Activated CD4-positive, alpha-beta memory T cell treated with anti-CD3 and anti-CD28 coated beads for 36 hours (primary cell): ENCODE measurements at regions of chr14 and their contacts with region 1.

Region 1: DNA sequence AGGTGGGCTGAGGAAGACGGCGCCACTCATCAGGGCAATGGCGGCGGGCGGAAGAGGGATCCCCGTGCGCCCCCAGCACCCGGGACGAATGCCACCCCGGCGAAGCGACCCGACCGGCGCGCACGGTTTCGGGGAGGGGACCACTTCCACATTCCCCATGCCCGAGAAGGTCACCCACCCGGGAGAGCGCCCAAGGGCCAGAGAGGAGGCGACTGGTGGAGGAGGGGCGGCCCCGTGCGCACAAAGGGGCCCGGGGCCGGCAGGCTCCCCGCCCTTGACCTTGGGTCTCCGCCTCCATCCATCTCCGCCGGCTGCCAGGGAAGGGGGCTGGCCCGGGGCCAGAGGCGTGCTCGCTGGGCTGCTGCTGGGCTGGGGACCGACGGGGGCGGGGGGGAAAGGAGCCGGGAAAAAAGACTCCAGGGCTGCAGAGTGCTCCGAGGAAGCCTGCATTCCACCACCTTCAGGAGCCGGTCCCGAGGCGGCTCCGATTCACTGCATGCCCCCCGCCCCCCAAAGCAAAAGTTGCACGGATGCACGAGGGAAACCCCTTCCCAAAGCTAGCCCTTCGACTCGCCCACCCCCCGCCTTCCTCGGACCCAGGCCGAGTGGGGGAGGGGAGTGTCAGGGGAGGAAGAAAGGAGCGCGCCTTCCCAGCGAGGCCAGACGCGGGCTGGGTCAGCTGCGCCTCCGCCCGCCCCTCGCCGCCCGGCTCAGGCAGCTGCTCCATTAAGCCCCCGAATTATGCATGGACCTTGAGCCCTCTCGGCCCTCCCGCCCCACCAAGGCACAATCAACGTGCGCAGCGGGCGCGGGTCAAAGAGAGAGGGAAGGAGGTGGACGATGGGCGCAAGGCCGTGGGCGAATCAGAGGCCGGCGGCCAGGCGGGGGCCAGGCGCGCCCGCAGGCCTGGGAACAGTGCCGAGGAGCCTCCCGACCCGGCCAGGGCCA is 26.2 kb downstream of the BCL11B start:
- DNase-seq: no peak
- H3K4me3 Mint-ChIP-seq: peak overlapping the region; percentile 75
- H3K27ac Mint-ChIP-seq: peak overlapping the region; percentile 96
- H3K4me1 Mint-ChIP-seq: peaks cover 74% of the 10 kb centered on the region
- H3K27me3 Mint-ChIP-seq: no peaks in the 10 kb centered on the region

Region 2: GRCh38 chr14:99230208-99231151 is 15.4 kb before region 1 on chr14:
- CTCF ChIA-PET with region 1: interaction called, 23 read pairs
- POLR2A ChIA-PET with region 1: interaction called, 10 read pairs
- intact Hi-C with region 1: loop called (anchors 2 kb)
- DNase-seq: peak; percentile 94
- H3K4me3 Mint-ChIP-seq: peak overlapping the region; percentile 68
- H3K27ac Mint-ChIP-seq: peak overlapping the region; percentile 96
- H3K4me1 Mint-ChIP-seq: peaks cover 95% of the 10 kb centered on the region
- H3K27me3 Mint-ChIP-seq: no peaks in the 10 kb centered on the region

Region 3: DNA sequence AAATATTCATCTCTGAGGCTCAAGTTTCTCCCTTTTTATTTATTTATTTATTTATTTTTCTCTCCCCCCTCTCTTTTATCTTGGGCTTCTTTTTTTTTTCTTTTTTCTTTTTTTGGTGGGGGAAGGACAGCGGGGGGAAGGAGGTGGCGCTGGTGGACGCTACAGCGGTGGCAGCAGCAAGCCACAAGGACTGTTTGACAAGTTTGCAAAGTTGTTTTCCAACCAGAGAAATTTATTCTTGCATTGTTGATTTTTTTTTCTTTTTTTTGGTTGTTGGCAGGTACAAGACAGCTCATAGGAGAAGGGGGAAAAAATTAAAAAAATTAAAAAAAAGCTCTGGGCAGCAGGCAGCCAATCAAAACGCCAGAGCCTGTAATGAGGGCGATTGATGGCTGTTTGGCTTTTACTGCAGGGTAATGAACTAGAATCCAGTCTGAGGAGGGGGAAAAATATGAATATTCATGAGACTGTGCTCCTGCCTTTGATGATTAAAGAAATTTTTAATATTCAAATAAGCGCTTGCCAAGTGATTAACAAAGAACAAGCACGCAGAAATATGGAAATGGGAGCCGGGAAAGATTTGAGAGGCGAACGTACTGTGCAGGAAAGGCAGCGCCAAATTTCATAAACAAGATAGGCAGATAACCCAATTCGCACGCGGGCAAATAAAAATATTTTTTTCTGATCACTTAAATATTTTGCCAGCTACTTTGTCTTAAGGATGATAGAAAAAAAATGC is 10.1 kb before region 1 on chr14:
- CTCF ChIA-PET with region 1: interaction called, 23 read pairs
- POLR2A ChIA-PET with region 1: interaction called, 12 read pairs
- intact Hi-C with region 1: loop called (anchors 2 kb)
- DNase-seq: no peak
- H3K4me3 Mint-ChIP-seq: peak overlapping the region; percentile 76
- H3K27ac Mint-ChIP-seq: peak overlapping the region; percentile 96
- H3K4me1 Mint-ChIP-seq: peaks cover 91% of the 10 kb centered on the region
- H3K27me3 Mint-ChIP-seq: no peaks in the 10 kb centered on the region

Region 4: GRCh38 chr14:99260587-99261551 is 15.0 kb after region 1 on chr14:
- CTCF ChIA-PET with region 1: interaction called, 44 read pairs
- POLR2A ChIA-PET with region 1: interaction called, 425 read pairs
- intact Hi-C with region 1: loop called (anchors 1 kb)
- DNase-seq: peak; percentile 71
- H3K4me3 Mint-ChIP-seq: peak overlapping the region; percentile 96
- H3K27ac Mint-ChIP-seq: peak overlapping the region; percentile 100
- H3K4me1 Mint-ChIP-seq: peaks cover 85% of the 10 kb centered on the region
- H3K27me3 Mint-ChIP-seq: no peaks in the 10 kb centered on the region